ENCODE measurements at regions of chr19 and their contacts with region 1.

Region 1: GRCh38 chr19:47514869-47515588 is at the start of gene NAPA:
- DNase-seq: peak; percentile 100
- H3K4me3 ChIP-seq: peak within 1 kb of the TSS; percentile 86 to 89
- H3K27ac ChIP-seq: peak within 1 kb of the TSS; percentile 99
- H3K4me1 ChIP-seq: peaks cover 51% of the 10 kb centered on the region
- H3K27me3 ChIP-seq: no peaks in the 10 kb centered on the region
- CTCF ChIP-seq: no peak
- POLR2A ChIP-seq: peak in 1 of 2 donors; percentile 95
- total RNA-seq, gene NAPA: 108 TPM

Region 2: GRCh38 chr19:47273313-47273977 is 241.6 kb before region 1 on chr19:
- intact Hi-C with region 1: loop called (anchors 10 kb)
- DNase-seq: no peak
- H3K4me3 ChIP-seq: peak overlapping the region; percentile 86 to 90
- H3K27ac ChIP-seq: peak overlapping the region; percentile 99
- H3K4me1 ChIP-seq: peaks cover 38% of the 10 kb centered on the region
- H3K27me3 ChIP-seq: no peaks in the 10 kb centered on the region
- CTCF ChIP-seq: no peak
- POLR2A ChIP-seq: peak in 1 of 2 donors; percentile 82

Region 3: GRCh38 chr19:47436712-47437401 is 78.2 kb before region 1 on chr19:
- intact Hi-C with region 1: loop called (anchors 10 kb)
- DNase-seq: no peak
- H3K4me3 ChIP-seq: no peak overlapping the region
- H3K27ac ChIP-seq: no peak overlapping the region
- H3K4me1 ChIP-seq: peaks cover 4% of the 10 kb centered on the region
- H3K27me3 ChIP-seq: no peaks in the 10 kb centered on the region
- CTCF ChIP-seq: peak; percentile 64 to 94 (median 93)
- POLR2A ChIP-seq: no peak

Region 4: GRCh38 chr19:47600246-47601179 is 85.5 kb after region 1 on chr19:
- intact Hi-C with region 1: loop called (anchors 10 kb)
- DNase-seq: peak; percentile 98 to 99
- H3K4me3 ChIP-seq: peak overlapping the region; percentile 43 to 62
- H3K27ac ChIP-seq: peak overlapping the region; percentile 77
- H3K4me1 ChIP-seq: peaks cover 25% of the 10 kb centered on the region
- H3K27me3 ChIP-seq: no peaks in the 10 kb centered on the region
- CTCF ChIP-seq: no peak
- POLR2A ChIP-seq: peak in 1 of 2 donors; percentile 88